HCT116 (cell line): ENCODE measurements at regions of chr16 and their contacts with region 1.

Region 1: GRCh38 chr16:87778830-87779579 is 13.2 kb upstream of the KLHDC4 start:
- DNase-seq: peak; percentile 94
- ATAC-seq: peak; percentile 70
- H3K4me3 ChIP-seq: peak overlapping the region in 1 of 2 experiments; percentile 15; a peak in 1 of 4 replicates
- H3K27ac ChIP-seq: peak overlapping the region; percentile 72
- H3K4me1 ChIP-seq: peaks cover 14 to 44% of the 10 kb centered on the region in 2 experiments; a peak in 3 of 4 replicates
- H3K27me3 ChIP-seq: no peaks in the 10 kb centered on the region
- CTCF ChIP-seq: peak in 2 of 3 experiments; percentile 88 to 94; a peak in 4 of 6 replicates
- POLR2A ChIP-seq: no peak
- RAD21 ChIP-seq: no peak

Region 2: DNA sequence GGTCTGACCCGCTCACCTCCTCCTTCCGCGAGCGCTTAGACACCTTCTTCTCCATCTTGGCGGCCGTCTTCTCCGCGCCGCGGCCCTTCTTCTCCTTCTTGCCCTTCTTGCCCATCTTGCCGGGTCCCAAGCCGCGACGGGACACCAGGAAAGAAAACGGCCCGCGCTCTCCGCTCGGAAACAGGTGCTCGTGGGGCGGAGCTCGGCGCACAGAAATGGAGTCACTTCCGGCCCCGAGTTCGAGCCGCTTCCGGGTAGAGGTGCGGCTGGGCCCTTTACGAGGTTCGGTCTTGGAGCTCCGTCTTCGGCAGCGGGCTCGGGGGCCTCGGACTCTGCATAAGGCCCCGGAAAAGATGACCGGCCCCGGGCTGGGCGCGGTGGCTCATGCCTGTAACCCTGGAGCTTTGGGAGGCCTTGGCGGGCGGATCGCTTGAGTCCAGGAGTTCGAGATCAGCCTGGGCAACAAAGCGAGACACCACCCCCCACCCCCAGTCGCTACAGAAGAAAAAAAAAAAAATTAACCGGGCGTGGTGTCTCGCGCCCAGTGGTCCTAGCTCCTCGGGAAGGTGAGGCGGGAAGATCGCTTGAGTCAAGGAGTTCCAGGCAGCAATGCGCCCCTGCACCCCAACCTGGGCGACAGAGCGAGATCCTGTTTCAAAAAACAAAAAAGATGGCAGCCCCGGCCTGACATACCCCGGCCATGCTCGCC is 13.1 kb before region 1 on chr16 and contains the start of gene KLHDC4:
- CTCF ChIA-PET with region 1: interaction called, 42 read pairs
- POLR2A ChIA-PET with region 1: interaction called, 23 read pairs
- RAD21 ChIA-PET with region 1: interaction called in 1 of 2 experiments, 4 read pairs
- intact Hi-C with region 1: no loop called
- DNase-seq: peak; percentile 81
- ATAC-seq: peak; percentile 84
- H3K4me3 ChIP-seq: peak within 1 kb of the TSS; percentile 80 to 100
- H3K27ac ChIP-seq: peak within 1 kb of the TSS; percentile 68
- H3K4me1 ChIP-seq: peaks cover 13 to 29% of the 10 kb centered on the region in 2 experiments
- H3K27me3 ChIP-seq: no peaks in the 10 kb centered on the region
- CTCF ChIP-seq: no peak
- POLR2A ChIP-seq: peak; percentile 71
- RAD21 ChIP-seq: no peak
- total RNA-seq, gene KLHDC4: 107 TPM

Region 3: GRCh38 chr16:87806603-87807546 is 27.9 kb after region 1 on chr16:
- CTCF ChIA-PET with region 1: interaction called, 17 read pairs
- POLR2A ChIA-PET with region 1: interaction called, 17 read pairs
- RAD21 ChIA-PET with region 1: interaction called in 1 of 2 experiments, 6 read pairs
- intact Hi-C with region 1: loop called (anchors 2 kb)
- DNase-seq: peak; percentile 77
- ATAC-seq: peak; percentile 90
- H3K4me3 ChIP-seq: peak overlapping the region; percentile 51 to 66
- H3K27ac ChIP-seq: peak overlapping the region; percentile 71
- H3K4me1 ChIP-seq: peaks cover 21 to 23% of the 10 kb centered on the region in 2 experiments
- H3K27me3 ChIP-seq: no peaks in the 10 kb centered on the region
- CTCF ChIP-seq: no peak
- POLR2A ChIP-seq: no peak
- RAD21 ChIP-seq: no peak

Region 4: DNA sequence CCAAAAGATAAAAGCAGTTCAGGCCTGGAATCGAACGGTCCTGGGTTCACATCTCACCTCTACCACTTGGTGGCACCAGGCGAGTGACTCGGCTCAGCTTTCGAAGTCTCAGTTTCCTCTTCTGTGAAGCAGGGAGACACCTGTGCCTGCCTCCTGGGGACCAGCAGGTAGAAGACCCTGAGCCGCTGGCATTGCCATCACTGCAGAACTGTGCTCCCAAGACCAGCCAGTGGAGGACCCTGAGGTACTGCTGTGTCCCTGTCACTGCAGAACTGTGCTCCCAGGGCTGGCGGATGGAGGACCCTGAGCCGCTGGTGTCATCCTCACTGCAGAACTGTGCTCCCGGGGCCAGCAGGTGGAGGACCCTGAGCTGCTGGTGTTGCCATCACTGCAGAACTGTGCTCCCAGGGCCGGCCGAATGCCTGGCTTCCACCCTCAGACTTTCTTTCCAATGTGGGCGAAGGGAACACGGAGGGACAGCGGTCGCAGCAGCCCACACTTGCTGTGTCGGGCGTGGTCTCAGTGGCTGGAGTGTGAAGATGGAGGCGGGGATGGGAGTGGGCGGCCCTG is 99.0 kb after region 1 on chr16:
- CTCF ChIA-PET with region 1: interaction called, 257 read pairs
- POLR2A ChIA-PET with region 1: interaction called, 113 read pairs
- RAD21 ChIA-PET with region 1: interaction called, 5 to 50 read pairs
- intact Hi-C with region 1: no loop called
- DNase-seq: no peak
- ATAC-seq: peak; percentile 73
- H3K4me3 ChIP-seq: no peak overlapping the region
- H3K27ac ChIP-seq: no peak overlapping the region
- H3K4me1 ChIP-seq: peaks cover 0 to 8% of the 10 kb centered on the region in 2 experiments; a peak in 2 of 4 replicates
- H3K27me3 ChIP-seq: no peaks in the 10 kb centered on the region
- CTCF ChIP-seq: peak; percentile 38 to 50 (median 48); a peak in 5 of 6 replicates
- POLR2A ChIP-seq: no peak
- RAD21 ChIP-seq: peak; percentile 63

Region 5: GRCh38 chr16:88452482-88453216 is 673.6 kb after region 1 on chr16:
- CTCF ChIA-PET with region 1: no interaction called
- POLR2A ChIA-PET with region 1: no interaction called
- RAD21 ChIA-PET with region 1: no interaction called
- intact Hi-C with region 1: loop called (anchors 10 kb)
- DNase-seq: peak; percentile 92
- ATAC-seq: peak; percentile 75
- H3K4me3 ChIP-seq: peak overlapping the region; percentile 46 to 60
- H3K27ac ChIP-seq: peak overlapping the region; percentile 62
- H3K4me1 ChIP-seq: peaks cover 34 to 56% of the 10 kb centered on the region in 2 experiments
- H3K27me3 ChIP-seq: no peaks in the 10 kb centered on the region
- CTCF ChIP-seq: no peak
- POLR2A ChIP-seq: no peak
- RAD21 ChIP-seq: no peak